ENCODE measurements at regions of chr20 and their contacts with region 1.

Region 1: DNA sequence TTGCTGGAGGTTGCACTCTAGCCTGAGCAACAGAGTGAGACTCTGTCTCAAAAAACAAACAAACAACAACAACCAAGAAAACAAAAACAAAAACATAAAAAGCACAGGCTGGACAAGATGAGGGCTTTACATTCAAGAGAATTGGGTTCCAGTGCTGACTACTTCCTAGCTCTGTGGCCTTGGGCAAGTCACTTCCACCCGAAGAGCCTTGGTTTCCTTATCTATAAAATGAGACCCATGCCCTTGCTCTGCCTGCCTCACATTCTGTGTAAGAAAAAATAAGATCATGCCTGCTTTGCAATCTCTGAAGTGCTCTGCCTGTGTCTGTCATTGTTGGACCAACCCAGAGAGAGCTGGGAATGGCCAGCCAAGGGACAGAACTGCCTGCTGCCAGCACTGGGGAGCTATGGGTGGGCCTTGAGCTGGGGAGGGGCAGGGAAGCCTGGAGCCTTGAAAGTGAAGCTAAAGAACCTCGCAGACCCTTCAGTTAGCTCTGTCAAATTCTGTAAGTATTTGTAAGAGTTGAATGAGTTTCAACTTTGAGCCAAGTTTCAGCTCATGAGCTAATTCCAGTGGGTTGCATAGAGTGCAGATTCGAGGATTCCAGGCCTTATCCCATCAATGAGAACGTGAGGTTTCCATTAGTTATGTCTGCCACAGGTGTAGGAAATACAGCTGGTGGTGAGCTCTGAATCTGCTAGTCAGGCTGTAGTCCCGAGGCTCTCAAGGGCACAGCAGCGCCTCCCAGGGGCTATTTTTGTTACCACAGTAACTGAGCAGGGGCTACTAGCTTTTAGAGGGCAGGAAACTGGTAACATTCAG is 93.2 kb downstream of the DLGAP4 start:
- DNase-seq: peak; percentile 72 to 79 (median 76)
- ATAC-seq: peak; percentile 98
- H3K4me3 ChIP-seq: no peak overlapping the region
- H3K27ac ChIP-seq: no peak overlapping the region
- H3K4me1 ChIP-seq: no peaks in the 10 kb centered on the region; a peak in 1 of 5 replicates
- H3K27me3 ChIP-seq: peaks cover 19 to 40% of the 10 kb centered on the region in 2 experiments
- CTCF ChIP-seq: peak; percentile 84 to 88 (median 87)
- EP300 ChIP-seq: no peak
- POLR2A ChIP-seq: no peak
- RAD21 ChIP-seq: peak; percentile 8 to 76; a peak in 2 of 4 replicates

Region 2: DNA sequence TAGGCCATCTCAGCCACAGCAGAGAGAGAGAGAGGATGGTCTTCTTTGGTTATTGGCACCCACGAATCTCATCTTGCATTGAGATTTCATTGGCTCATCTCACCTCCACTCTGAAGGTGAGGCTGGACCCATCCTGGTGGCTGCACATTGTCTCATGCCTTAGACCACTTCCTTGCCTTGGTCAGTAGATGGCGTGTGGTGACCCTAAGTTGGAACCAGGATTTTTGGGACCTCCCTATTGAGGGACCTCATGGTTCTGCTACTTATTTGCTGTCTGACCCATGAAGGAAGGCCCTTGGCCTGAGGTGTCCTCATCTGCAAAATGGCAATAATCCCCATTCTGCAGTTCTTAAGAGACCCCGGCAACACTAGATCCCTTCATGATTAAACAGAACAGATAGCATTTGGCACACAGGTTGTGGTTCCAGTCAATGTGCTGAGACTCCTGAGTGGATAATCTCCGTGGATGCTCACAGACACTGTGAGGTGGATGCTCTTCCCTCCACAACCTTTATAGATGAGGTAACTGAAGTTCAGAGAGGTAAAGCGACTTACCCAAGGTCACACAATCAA is 184.6 kb before region 1 on chr20:
- CTCF ChIA-PET with region 1: interaction called, 4 read pairs
- POLR2A ChIA-PET with region 1: no interaction called
- in situ Hi-C with region 1: no loop called
- intact Hi-C with region 1: loop called (anchors 2 kb)
- DNase-seq: peak; percentile 51 to 59 (median 56)
- ATAC-seq: peak; percentile 83
- H3K4me3 ChIP-seq: no peak overlapping the region
- H3K27ac ChIP-seq: no peak overlapping the region
- H3K4me1 ChIP-seq: no peaks in the 10 kb centered on the region
- H3K27me3 ChIP-seq: peaks cover 27 to 63% of the 10 kb centered on the region in 2 experiments
- CTCF ChIP-seq: peak; percentile 75 to 85 (median 81)
- EP300 ChIP-seq: no peak
- POLR2A ChIP-seq: no peak
- RAD21 ChIP-seq: peak; percentile 58 to 81

Region 3: GRCh38 chr20:36273414-36274180 is 125.8 kb before region 1 on chr20:
- CTCF ChIA-PET with region 1: no interaction called
- POLR2A ChIA-PET with region 1: no interaction called
- in situ Hi-C with region 1: no loop called
- intact Hi-C with region 1: loop called (anchors 1 kb)
- DNase-seq: peak in 1 of 4 experiments; percentile 38
- ATAC-seq: peak; percentile 62
- H3K4me3 ChIP-seq: no peak overlapping the region
- H3K27ac ChIP-seq: no peak overlapping the region
- H3K4me1 ChIP-seq: peaks cover 0 to 3% of the 10 kb centered on the region in 2 experiments; a peak in 1 of 5 replicates
- H3K27me3 ChIP-seq: peaks cover 21 to 65% of the 10 kb centered on the region in 2 experiments; a peak in 4 of 5 replicates
- CTCF ChIP-seq: peak; percentile 44 to 49 (median 46); a peak in 5 of 6 replicates
- EP300 ChIP-seq: no peak
- POLR2A ChIP-seq: no peak
- RAD21 ChIP-seq: peak in 1 of 2 experiments; percentile 50; a peak in 2 of 4 replicates

Region 4: DNA sequence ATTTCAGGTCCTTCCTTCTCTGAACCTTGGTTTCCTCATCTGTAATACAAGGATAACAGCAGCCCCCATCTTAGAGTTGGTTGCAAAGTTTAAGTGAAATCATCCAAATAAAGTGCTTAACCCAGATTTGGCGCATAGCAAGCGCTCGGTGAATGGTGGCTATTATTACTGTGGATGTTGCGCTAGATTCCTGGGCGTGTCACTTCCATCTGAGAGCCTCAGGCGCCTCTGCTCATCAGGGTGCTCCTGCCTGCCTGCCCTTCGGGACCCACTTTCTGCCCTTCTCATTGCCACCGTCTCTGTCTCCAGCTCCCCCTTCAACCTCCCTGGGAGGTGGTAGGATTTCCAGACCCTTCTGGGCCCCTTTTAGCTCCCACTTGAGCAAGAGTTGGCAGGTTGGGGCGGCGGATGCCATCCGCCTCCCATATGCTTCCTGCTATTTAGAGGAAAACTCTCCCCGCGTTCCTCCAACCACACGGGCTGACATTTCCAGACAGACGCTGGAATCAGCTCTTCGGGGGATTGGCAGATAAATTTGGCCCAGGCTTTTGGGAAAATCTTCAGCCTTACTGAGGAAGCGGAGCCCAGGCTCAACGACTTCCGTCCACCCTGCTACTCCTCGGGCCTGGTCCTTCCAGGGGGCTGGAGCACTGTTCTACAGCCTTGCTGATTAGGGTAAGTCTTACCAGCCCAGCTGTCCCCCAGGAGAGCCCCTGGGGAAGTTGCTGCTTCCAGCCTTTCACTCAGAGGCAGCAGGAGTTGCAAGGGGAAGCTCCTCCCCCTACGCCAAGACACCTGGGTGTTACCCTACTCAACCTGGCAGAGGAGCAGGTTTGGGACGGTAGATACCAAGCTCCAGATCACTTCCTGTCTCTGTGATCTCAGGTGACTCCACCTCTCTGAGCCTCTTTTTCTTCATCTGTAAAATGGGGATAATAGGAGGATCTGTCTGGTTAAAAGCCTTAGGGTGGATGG is 21.7 kb before region 1 on chr20:
- CTCF ChIA-PET with region 1: no interaction called
- POLR2A ChIA-PET with region 1: no interaction called
- in situ Hi-C with region 1: no loop called
- intact Hi-C with region 1: no loop called
- DNase-seq: no peak
- ATAC-seq: no peak
- H3K4me3 ChIP-seq: no peak overlapping the region
- H3K27ac ChIP-seq: no peak overlapping the region
- H3K4me1 ChIP-seq: no peaks in the 10 kb centered on the region
- H3K27me3 ChIP-seq: peaks cover 14 to 43% of the 10 kb centered on the region in 2 experiments; a peak in 3 of 5 replicates
- CTCF ChIP-seq: no peak
- EP300 ChIP-seq: no peak
- POLR2A ChIP-seq: no peak
- RAD21 ChIP-seq: no peak

Region 5: DNA sequence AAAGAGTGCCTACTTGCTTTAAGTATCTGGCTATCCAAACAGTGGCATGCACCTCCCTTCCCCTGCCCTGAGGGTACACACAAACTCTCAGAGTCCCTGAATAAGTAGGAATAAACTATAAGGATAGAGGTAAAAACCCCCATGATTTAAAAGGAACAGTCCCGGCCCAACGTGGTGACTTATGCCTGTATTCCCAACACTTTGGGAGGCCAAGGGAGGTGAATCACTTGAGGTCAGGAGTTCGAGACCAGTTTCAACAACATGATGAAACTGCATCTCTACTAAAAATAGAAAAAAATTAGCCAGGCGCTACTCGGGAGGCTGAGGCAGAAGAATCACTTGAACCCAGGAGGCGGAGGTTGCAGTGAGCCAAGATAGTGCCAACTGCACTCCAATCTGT is 529.9 kb after region 1 on chr20:
- CTCF ChIA-PET with region 1: no interaction called
- POLR2A ChIA-PET with region 1: no interaction called
- in situ Hi-C with region 1: no loop called
- intact Hi-C with region 1: no loop called
- DNase-seq: no peak
- ATAC-seq: no peak
- H3K4me3 ChIP-seq: no peak overlapping the region
- H3K27ac ChIP-seq: no peak overlapping the region
- H3K4me1 ChIP-seq: peaks cover 2 to 8% of the 10 kb centered on the region in 2 experiments; a peak in 3 of 5 replicates
- H3K27me3 ChIP-seq: no peaks in the 10 kb centered on the region
- CTCF ChIP-seq: no peak
- EP300 ChIP-seq: no peak
- POLR2A ChIP-seq: no peak
- RAD21 ChIP-seq: no peak